ENCODE measurements at regions of chr6 and their contacts with region 1.

Region 1: GRCh38 chr6:45421709-45422502 is 44.2 kb upstream of the SUPT3H start:
- DNase-seq: peak; percentile 54
- H3K4me3 Mint-ChIP-seq: peak overlapping the region; percentile 91
- H3K27ac Mint-ChIP-seq: peak overlapping the region; percentile 35
- H3K4me1 Mint-ChIP-seq: peaks cover 17% of the 10 kb centered on the region
- H3K27me3 Mint-ChIP-seq: no peaks in the 10 kb centered on the region
- CTCF ChIP-seq: no peak

Region 2: DNA sequence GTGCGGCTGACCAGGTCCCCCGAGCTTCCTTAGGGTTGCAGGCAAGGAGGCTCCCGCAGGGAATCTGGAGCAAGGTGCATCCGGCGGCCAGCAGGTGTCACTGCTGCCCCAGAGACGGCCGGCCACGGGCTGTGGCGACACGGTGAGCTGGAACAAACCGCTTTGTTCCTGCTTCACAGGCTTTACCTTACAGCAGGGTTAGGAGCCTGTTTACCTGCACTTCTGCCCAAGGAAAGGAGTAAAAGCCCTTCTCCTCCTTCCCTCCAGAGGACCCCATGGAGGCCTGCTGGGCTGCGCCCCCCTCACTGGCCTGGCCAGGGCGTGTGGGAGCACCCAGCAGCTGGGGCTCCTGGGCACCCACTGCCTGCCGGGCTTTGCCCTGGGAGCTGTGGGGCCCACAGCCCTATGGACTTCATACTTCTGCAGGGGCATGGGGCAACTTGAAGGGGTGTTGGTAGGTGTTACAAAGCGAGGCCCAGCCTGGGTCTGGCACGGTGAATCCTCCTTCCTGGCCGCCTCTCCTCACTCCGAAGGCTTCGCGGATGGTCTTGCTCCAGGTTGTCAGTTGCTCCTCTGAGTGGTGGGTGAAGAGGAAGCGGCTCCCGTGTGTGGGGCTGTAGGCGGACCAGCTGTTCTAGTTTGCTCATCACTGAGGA is 946.0 kb before region 1 on chr6:
- CTCF ChIA-PET with region 1: interaction called, 4 read pairs
- POLR2A ChIA-PET with region 1: no interaction called
- intact Hi-C with region 1: loop called (anchors 2 kb)
- DNase-seq: peak; percentile 76
- H3K4me3 Mint-ChIP-seq: no peak overlapping the region
- H3K27ac Mint-ChIP-seq: no peak overlapping the region
- H3K4me1 Mint-ChIP-seq: no peaks in the 10 kb centered on the region
- H3K27me3 Mint-ChIP-seq: no peaks in the 10 kb centered on the region
- CTCF ChIP-seq: peak; percentile 95

Region 3: DNA sequence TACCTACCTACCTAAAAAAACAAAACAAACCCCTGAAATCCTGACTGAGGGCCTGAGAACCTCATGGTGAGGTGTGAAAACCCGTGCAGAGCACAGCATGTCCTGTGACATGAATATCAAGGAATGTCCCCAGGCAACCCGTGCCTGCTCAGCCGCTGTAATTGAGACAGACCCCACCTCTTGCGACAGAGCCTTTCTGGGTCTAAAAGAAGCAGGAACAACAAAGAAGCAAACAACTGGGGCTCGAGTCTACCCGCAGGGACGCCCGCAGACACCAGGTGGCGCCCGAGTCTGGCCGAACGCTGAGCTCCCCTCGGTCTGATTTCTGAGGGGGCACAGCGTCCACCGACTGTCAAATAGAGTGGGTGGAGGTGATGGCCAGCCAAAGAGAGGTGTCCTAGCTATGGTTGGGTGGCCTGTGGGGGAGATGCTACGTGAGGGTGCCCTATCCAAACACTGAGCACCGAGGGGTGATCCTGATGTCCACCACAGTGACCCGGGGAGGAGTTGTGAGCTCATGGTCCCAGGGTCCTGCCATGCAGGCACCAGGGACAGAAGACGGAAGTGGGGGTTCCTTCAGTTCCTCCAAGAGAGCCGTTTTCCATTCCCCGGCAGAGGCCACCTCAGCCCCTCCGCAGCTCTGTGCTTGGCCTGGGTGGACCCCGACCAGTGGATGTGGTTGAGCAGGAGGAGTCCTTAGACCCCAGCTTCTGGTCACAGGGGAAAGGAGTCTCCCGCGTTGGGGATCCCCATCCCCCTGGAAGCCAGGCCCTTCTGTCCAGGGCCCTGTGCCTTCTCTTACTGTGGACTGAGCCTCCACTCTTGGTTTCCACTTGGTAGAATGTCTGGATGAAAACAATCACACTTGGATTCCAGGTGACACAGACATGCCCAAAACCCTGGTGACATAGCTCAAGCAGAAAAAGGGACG is 766.2 kb before region 1 on chr6:
- CTCF ChIA-PET with region 1: interaction called, 22 read pairs
- POLR2A ChIA-PET with region 1: interaction called, 3 read pairs
- intact Hi-C with region 1: loop called (anchors 1 kb)
- DNase-seq: peak; percentile 66
- H3K4me3 Mint-ChIP-seq: peak overlapping the region; percentile 3
- H3K27ac Mint-ChIP-seq: peak overlapping the region; percentile 76
- H3K4me1 Mint-ChIP-seq: peaks cover 13% of the 10 kb centered on the region
- H3K27me3 Mint-ChIP-seq: no peaks in the 10 kb centered on the region
- CTCF ChIP-seq: peak; percentile 97

Region 4: DNA sequence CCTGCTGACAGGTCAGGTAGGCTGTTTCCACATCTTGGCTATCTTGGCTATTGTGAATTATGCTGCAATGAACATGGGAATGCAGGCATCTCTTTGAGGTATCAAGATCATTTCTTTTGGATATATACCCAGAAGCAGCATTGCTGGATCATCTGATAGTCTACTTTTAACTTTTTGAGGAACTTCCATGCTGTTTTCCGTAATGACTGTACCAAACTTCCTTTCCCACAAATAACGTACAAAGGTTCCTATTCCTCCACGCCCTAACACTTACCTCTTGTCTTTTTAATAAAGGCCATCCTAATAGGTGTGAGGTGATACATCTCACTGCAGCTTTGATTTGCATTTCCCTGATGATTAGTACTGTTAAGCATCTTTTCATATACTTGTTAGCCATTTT is 432.5 kb before region 1 on chr6:
- CTCF ChIA-PET with region 1: no interaction called
- POLR2A ChIA-PET with region 1: no interaction called
- intact Hi-C with region 1: no loop called
- DNase-seq: peak; percentile 0
- H3K4me3 Mint-ChIP-seq: no peak overlapping the region
- H3K27ac Mint-ChIP-seq: no peak overlapping the region
- H3K4me1 Mint-ChIP-seq: no peaks in the 10 kb centered on the region
- H3K27me3 Mint-ChIP-seq: no peaks in the 10 kb centered on the region
- CTCF ChIP-seq: no peak

Region 5: GRCh38 chr6:45377554-45378333 is 44.2 kb before region 1 on chr6 and contains the start of gene SUPT3H:
- CTCF ChIA-PET with region 1: interaction called, 8 read pairs
- POLR2A ChIA-PET with region 1: interaction called, 15 read pairs
- intact Hi-C with region 1: no loop called
- DNase-seq: peak; percentile 91
- H3K4me3 Mint-ChIP-seq: peak within 1 kb of the TSS; percentile 98
- H3K27ac Mint-ChIP-seq: peak within 1 kb of the TSS; percentile 98
- H3K4me1 Mint-ChIP-seq: peaks cover 24% of the 10 kb centered on the region
- H3K27me3 Mint-ChIP-seq: no peaks in the 10 kb centered on the region
- CTCF ChIP-seq: no peak
- total RNA-seq, gene SUPT3H: 12.7 and 14.4 TPM in 2 replicates

Region 6: GRCh38 chr6:45479834-45480751 is 58.2 kb after region 1 on chr6:
- CTCF ChIA-PET with region 1: interaction called, 5 read pairs
- POLR2A ChIA-PET with region 1: no interaction called
- intact Hi-C with region 1: loop called (anchors 2 kb)
- DNase-seq: peak; percentile 70
- H3K4me3 Mint-ChIP-seq: no peak overlapping the region
- H3K27ac Mint-ChIP-seq: no peak overlapping the region
- H3K4me1 Mint-ChIP-seq: peaks cover 10% of the 10 kb centered on the region
- H3K27me3 Mint-ChIP-seq: no peaks in the 10 kb centered on the region
- CTCF ChIP-seq: no peak

Region 7: DNA sequence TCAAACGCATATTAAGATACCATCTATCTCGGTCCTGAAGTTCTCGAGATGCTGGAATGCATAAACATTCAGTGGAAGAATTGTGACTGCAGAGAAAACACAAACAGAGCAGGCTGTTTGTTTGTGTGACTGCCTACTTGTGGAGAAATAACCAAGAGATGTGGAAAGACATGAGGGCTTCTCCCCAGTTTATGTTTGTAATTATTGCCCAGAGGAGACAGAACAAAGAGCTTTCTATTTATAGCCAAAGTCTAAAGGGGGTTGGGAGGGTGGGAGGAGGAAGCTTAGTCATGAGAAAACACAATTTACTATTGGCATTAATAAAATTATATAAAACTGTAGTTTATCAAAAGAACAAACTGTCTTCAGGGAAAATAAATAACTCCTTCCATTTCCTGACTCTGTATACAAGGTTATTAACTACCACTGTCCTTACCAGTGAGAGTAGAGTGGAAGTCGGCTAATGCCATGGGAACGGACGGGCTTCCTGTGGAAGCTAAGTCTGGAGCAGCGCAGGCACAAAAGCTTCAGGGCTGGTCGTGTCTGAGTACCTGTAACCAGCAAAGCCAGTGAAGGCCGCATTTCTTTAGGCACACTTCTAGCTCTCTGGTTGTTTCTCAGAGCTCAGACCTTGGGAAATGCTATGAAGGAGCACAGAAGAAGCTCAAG is 156.1 kb after region 1 on chr6:
- CTCF ChIA-PET with region 1: no interaction called
- POLR2A ChIA-PET with region 1: no interaction called
- intact Hi-C with region 1: no loop called
- DNase-seq: no peak
- H3K4me3 Mint-ChIP-seq: no peak overlapping the region
- H3K27ac Mint-ChIP-seq: no peak overlapping the region
- H3K4me1 Mint-ChIP-seq: no peaks in the 10 kb centered on the region
- H3K27me3 Mint-ChIP-seq: no peaks in the 10 kb centered on the region
- CTCF ChIP-seq: no peak

Region 8: GRCh38 chr6:45922728-45923351 is 500.9 kb after region 1 on chr6:
- CTCF ChIA-PET with region 1: interaction called, 8 read pairs
- POLR2A ChIA-PET with region 1: interaction called, 3 read pairs
- intact Hi-C with region 1: loop called (anchors 1 kb)
- DNase-seq: peak; percentile 73
- H3K4me3 Mint-ChIP-seq: no peak overlapping the region
- H3K27ac Mint-ChIP-seq: peak overlapping the region; percentile 39
- H3K4me1 Mint-ChIP-seq: peaks cover 6% of the 10 kb centered on the region
- H3K27me3 Mint-ChIP-seq: no peaks in the 10 kb centered on the region
- CTCF ChIP-seq: peak; percentile 64

Measured in MCF 10A (cell line).